AG04450 (cell line): ENCODE measurements at regions of chr20 and their contacts with region 1.

Region 1: DNA sequence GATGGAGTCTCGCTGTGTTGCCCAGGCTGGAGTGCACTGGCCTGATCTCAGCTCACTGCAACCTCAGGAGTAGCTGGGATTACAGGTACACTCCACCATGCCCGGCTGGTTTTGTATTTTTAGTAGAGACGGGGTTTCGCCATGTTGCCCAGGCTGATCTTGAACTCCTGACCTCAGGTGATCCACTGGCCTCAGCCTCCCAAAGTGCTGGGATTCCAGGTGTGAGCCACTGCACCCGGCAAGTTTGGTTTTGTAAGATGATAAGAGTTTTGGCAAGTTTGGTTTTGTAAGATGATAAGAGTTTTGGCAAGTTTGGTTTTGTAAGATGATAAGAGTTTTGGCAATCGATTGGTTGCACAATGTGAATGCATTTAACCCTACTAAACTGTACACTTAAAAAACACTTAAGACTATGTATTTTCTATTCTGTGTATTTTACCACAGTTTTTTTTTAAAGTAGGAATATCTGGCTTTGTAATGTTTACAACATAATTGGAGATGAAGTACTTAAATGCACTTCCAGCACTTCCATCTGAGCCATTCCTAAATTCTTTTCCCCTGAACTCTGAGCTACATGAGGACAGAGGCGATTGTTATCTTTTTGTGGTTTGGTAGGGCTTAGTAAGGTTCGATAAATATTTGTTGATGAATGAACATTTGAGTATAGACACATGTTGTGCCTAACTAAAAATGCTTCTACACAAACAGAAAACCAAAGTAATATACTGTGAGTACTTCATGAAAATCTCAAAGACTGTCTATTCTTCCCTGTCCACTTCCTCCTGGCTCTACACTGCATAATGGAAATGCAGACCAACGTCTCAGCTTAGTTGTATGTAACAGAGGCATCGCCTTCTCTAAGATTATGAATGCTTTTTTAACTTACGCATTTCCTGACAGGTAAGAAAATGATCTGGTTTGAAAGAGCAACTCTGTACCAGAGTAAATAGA is 18.8 kb downstream of the SAMHD1 start:
- DNase-seq: peak; percentile 44
- H3K4me3 ChIP-seq: no peak overlapping the region
- H3K27ac ChIP-seq: no peak overlapping the region
- H3K27me3 ChIP-seq: no peaks in the 10 kb centered on the region
- CTCF ChIP-seq: no peak

Region 2: DNA sequence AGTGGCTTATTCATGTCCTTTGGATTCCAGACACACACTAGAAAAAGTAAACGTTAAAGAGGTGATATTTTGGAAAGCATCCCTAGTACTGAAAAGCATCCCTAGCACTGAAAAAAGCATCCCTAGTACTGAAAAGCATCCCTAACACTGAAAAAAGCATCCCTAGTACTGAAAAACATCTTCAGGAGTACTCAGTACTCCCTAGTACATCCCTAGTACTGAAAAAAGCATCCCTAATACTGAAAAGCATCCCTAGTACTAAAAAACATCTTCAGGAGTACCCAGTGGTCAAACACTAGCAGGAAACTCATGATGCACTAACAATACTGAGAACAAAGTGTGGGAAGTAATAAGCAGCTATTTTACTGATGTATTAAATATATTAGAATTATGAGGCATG is 64.4 kb after region 1 on chr20:
- CTCF ChIA-PET with region 1: no interaction called
- POLR2A ChIA-PET with region 1: interaction called, 13 read pairs
- DNase-seq: no peak
- H3K4me3 ChIP-seq: no peak overlapping the region
- H3K27ac ChIP-seq: no peak overlapping the region
- H3K27me3 ChIP-seq: no peaks in the 10 kb centered on the region
- CTCF ChIP-seq: no peak